ENCODE measurements at regions of chr11 and their contacts with region 1.

Region 1: GRCh38 chr11:133834682-133835592 is 10.4 kb downstream of the SPATA19 start:
- DNase-seq: peak; percentile 73
- CTCF ChIP-seq: peak; percentile 69

Region 2: DNA sequence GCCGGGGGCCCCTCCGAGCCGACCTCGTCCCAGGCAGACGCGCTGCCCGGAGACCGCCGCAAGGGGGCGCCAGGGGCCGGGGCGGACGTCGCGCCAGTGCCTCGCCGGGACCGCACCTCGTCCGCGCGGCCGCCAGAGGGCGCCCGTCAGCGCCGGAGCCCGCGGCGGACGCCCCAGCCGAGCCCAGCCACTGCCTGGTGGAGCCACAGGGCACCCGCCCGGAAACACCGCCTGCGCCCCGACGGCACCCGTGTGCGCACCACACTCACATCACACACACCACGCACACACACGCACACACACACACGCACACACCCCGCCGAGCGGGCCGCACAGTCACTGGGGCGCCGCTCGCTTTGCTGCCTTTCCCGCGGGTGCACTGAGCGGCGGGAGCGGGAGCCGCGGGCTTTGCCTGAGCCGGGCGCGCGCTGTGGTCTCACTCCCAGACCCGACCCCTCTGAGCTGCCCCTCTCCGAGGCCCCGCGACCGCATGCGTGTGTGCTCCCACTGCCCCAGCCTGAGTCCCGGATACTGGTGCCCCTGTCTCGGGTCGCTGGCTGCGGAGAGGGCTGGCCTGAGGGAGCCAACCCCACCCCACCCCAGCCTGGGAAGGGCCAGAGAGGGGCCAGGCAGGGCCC is 752.0 kb before region 1 on chr11:
- CTCF ChIA-PET with region 1: interaction called, 65 read pairs
- POLR2A ChIA-PET with region 1: no interaction called
- DNase-seq: peak; percentile 88
- CTCF ChIP-seq: peak; percentile 93

Region 3: DNA sequence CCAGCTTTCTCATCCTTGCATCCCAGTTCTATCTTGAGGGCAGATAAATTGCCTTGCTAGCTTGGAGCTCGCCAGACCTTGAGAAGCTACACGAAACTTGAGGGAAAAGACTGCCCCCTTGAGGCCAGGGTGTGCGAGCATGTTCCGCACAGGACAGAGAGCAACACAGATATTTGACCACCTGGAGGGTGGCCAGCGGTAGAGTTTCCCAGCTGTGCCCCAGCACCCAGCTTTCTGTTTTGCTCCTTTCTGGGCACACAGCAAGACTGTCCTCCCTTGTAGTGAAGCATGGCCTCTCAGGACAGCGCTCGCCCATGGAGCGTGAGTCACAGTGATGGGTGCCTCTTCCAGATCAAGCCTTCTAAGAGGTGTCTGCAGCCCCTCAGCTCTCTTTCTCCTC is 13.2 kb before region 1 on chr11:
- CTCF ChIA-PET with region 1: interaction called, 11 read pairs
- POLR2A ChIA-PET with region 1: no interaction called
- DNase-seq: peak; percentile 68
- CTCF ChIP-seq: peak; percentile 71